PC-9 (cell line): ENCODE measurements at regions of chr1 and their contacts with region 1.

Region 1: GRCh38 chr1:231226156-231226555 is 14.9 kb upstream of the GNPAT start:
- DNase-seq: no peak
- H3K4me3 ChIP-seq: no peak overlapping the region
- H3K27ac ChIP-seq: no peak overlapping the region
- H3K4me1 ChIP-seq: no peaks in the 10 kb centered on the region
- H3K27me3 ChIP-seq: no peaks in the 10 kb centered on the region
- CTCF ChIP-seq: no peak

Region 2: DNA sequence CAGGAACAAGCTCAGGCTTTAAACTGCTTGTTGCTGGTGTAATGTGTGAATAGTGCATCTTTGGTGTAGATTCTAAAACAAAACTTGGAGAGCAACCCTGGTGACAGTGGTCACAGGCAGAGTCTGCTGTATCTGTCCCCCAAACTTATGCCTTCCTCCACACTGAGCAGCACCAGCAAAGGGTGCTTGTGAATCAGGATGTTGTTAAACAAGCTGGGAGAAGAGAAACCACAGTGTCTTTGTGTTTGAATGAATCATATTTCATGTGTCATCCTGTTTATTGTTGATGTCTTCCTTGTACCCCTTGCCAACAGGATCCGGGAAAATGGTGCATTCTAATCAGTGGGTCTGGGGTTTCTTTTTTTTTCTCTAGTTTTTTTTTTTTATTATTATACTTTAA is 675.7 kb before region 1 on chr1:
- CTCF ChIA-PET with region 1: no interaction called
- POLR2A ChIA-PET with region 1: no interaction called
- intact Hi-C with region 1: no loop called
- DNase-seq: no peak
- H3K4me3 ChIP-seq: no peak overlapping the region
- H3K27ac ChIP-seq: no peak overlapping the region
- H3K4me1 ChIP-seq: no peaks in the 10 kb centered on the region
- H3K27me3 ChIP-seq: peaks cover 31% of the 10 kb centered on the region
- CTCF ChIP-seq: no peak

Region 3: GRCh38 chr1:231099996-231100767 is 126.0 kb before region 1 on chr1:
- CTCF ChIA-PET with region 1: no interaction called
- POLR2A ChIA-PET with region 1: no interaction called
- intact Hi-C with region 1: no loop called
- DNase-seq: no peak
- H3K4me3 ChIP-seq: no peak overlapping the region
- H3K27ac ChIP-seq: no peak overlapping the region
- H3K4me1 ChIP-seq: no peaks in the 10 kb centered on the region
- H3K27me3 ChIP-seq: peaks cover 72% of the 10 kb centered on the region
- CTCF ChIP-seq: no peak

Region 4: DNA sequence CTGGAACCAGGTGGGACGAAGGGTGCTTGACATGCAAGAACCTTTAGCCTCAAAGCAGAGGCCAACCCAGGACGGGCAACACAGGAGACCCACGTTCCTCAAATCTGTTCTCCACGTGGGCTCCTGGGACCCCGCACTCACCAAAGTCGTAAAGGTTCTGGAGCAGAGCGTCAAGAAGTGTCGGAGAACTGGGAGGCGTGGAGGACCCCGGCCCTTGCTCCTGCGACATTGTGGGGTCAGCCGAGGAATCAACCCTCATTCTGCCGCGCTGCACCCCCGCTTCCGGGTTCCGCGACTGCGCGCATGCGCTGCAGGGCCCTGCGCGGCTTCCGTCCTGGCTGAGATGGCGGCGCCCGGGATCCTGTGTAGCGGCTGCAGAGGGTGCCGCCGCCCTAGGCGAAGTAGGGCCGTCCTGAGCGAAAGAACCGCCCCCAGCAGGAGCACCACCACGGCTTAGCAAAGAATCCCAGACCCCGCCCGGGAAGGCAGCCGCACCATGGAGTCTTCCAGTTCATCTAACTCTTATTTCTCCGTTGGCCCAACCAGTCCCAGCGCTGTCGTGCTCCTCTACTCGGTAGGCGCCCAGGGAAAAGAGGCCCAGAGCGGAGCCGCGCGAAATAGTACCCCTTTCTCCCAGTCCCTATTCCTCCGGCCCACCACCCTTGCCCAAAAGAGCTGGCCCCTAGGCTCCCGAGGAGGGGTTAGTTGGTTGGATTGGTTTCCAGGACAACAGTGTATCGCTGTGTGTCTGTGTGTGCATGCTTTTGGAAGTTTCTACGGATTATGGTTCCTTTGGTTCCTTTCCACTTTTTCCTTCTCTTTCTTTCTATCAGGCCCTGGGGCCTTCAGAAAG is 15.0 kb after region 1 on chr1 and contains the start of gene GNPAT:
- CTCF ChIA-PET with region 1: interaction called, 3 read pairs
- POLR2A ChIA-PET with region 1: interaction called, 15 read pairs
- intact Hi-C with region 1: no loop called
- DNase-seq: peak; percentile 75 to 89
- H3K4me3 ChIP-seq: peak within 1 kb of the TSS; percentile 98
- H3K27ac ChIP-seq: peak within 1 kb of the TSS; percentile 46; the same call in 1 of the 2 replicates
- H3K4me1 ChIP-seq: peaks cover 19% of the 10 kb centered on the region
- H3K27me3 ChIP-seq: no peaks in the 10 kb centered on the region
- CTCF ChIP-seq: no peak
- total RNA-seq, gene GNPAT: 21.8 and 22.3 TPM in 2 replicates

Region 5: DNA sequence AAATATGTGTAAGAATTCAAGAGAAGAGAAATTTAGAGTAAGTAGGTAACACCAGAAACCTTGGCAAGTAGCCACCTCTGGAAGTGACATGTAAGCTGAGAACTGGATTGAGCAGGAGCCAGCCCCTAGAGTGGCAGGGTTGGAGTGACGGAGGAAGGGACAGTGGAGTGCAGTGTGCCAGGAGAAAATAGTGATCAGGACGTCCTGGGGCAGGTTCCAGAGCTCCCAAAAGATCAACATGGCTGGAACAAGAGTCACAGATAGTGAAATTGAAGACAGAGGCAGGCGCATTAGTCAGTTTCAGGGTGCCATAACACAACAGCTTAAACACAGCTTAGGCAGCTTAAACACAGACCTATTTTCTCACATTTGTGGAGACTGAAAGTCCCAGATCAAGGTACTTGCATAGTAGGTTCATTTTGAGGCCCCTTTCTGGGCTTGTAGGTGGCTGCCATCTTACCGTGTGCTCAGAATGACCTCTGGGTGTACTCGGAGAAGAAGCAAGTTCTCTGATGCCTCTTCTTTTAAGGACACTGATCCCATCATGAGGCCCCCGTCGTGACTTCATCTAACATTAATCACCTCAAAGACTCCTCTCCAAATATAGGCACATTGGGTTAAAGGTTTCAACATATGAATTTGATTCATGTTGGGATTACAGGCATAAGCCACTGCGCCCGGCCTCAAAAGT is 52.1 kb after region 1 on chr1:
- CTCF ChIA-PET with region 1: no interaction called
- POLR2A ChIA-PET with region 1: no interaction called
- intact Hi-C with region 1: no loop called
- DNase-seq: no peak
- H3K4me3 ChIP-seq: no peak overlapping the region
- H3K27ac ChIP-seq: no peak overlapping the region
- H3K4me1 ChIP-seq: no peaks in the 10 kb centered on the region
- H3K27me3 ChIP-seq: no peaks in the 10 kb centered on the region
- CTCF ChIP-seq: no peak